PC-9 (cell line): ENCODE measurements at regions of chr12 and their contacts with region 1.

Region 1: DNA sequence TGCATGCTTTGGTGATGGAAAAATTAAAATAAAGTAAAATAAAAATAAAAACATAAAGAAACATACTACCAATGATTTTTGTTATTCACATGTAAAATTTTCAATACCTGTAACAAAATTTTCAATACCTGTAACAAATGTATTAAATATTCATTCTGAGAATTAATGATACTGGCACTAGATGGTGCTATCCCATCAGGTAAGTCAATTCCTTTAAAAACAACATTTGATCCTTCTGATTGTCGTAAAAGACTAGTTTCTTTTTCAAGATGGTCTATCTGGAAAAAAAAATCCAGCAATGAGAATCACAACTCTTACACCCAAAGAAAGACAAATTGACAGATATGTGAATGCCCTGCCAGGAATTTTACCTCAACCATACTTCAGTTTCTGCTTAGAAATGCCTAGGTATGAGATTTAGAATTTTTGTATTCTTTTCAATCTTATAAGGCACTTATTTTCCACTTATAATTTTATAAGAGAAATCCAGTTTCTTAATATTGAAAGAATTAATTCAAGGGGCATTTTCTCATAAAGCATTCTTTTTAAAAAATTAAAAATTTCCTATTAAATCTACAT is 30.7 kb downstream of the CEP290 start:
- DNase-seq: no peak
- H3K4me3 ChIP-seq: no peak overlapping the region
- H3K27ac ChIP-seq: no peak overlapping the region
- H3K4me1 ChIP-seq: no peaks in the 10 kb centered on the region
- H3K27me3 ChIP-seq: no peaks in the 10 kb centered on the region
- CTCF ChIP-seq: peak; percentile 72

Region 2: DNA sequence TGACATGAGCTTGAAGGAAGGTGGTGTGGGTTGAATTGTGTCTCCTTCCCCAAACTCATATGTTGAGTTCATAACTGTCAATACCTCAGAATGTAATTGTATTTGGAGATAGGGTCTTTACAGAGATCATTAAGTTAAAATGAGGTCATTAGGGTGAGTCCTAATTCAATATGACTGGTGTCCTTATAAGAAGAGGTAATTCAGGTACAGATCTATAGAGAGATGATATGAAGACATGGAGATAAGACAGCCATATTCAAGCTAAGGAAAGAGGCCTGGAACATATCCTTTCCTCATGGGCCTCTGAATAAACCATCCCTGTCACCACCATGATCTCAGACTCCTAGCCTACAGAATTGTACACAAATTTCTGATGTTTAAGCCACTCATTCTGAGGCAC is 1340.3 kb before region 1 on chr12:
- CTCF ChIA-PET with region 1: no interaction called
- POLR2A ChIA-PET with region 1: no interaction called
- intact Hi-C with region 1: no loop called
- DNase-seq: no peak
- H3K4me3 ChIP-seq: no peak overlapping the region
- H3K27ac ChIP-seq: no peak overlapping the region
- H3K4me1 ChIP-seq: no peaks in the 10 kb centered on the region
- H3K27me3 ChIP-seq: no peaks in the 10 kb centered on the region
- CTCF ChIP-seq: no peak

Region 3: GRCh38 chr12:88153959-88154358 is 42.8 kb after region 1 on chr12:
- CTCF ChIA-PET with region 1: no interaction called
- POLR2A ChIA-PET with region 1: no interaction called
- intact Hi-C with region 1: no loop called
- DNase-seq: no peak
- H3K4me3 ChIP-seq: no peak overlapping the region
- H3K27ac ChIP-seq: no peak overlapping the region
- H3K4me1 ChIP-seq: no peaks in the 10 kb centered on the region
- H3K27me3 ChIP-seq: no peaks in the 10 kb centered on the region
- CTCF ChIP-seq: peak; percentile 69

Region 4: GRCh38 chr12:88291498-88292131 is 180.5 kb after region 1 on chr12:
- CTCF ChIA-PET with region 1: no interaction called
- POLR2A ChIA-PET with region 1: no interaction called
- intact Hi-C with region 1: no loop called
- DNase-seq: no peak
- H3K4me3 ChIP-seq: no peak overlapping the region
- H3K27ac ChIP-seq: no peak overlapping the region
- H3K4me1 ChIP-seq: no peaks in the 10 kb centered on the region
- H3K27me3 ChIP-seq: no peaks in the 10 kb centered on the region
- CTCF ChIP-seq: no peak

Region 5: GRCh38 chr12:88401155-88401554 is 290.0 kb after region 1 on chr12:
- CTCF ChIA-PET with region 1: no interaction called
- POLR2A ChIA-PET with region 1: no interaction called
- intact Hi-C with region 1: no loop called
- DNase-seq: peak in 1 of 2 experiments; percentile 42
- H3K4me3 ChIP-seq: no peak overlapping the region
- H3K27ac ChIP-seq: no peak overlapping the region
- H3K4me1 ChIP-seq: peaks cover 23% of the 10 kb centered on the region
- H3K27me3 ChIP-seq: no peaks in the 10 kb centered on the region
- CTCF ChIP-seq: no peak

Region 6: DNA sequence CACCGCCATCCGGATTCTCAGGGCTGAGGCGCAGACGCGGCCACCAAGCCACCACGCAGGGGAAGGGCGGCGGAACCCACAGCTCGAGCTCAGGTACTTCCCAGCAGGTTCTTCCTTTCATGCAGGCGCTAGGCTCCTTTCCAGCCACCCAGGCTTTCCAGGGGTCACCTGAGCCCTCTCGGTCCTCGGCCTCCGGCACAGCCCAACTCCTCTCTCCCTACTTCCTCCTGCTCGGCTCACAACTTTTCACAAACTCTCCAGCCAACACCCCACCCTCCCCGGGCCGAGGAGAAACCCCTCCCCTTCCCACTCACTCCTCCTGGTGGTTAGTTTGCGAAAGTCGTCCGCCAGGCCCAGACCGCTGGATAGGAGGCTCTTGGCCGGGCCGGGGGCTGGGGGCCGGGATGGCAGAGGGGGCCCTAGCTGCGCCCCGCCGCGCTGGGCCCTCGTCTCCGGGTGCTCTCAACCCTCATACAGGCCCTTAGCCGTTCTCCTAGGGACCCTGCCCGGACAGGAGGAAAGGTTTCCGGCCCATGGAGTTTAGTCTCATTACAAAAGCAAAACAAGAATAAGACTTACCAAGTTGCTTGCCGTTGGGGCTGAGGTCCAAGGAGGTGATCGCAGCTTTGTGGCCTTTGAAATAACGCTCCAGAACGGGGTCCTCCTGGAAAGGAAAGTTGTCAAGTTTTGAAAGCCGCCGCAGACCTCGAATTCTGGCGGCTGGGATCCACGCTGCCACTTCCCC is 1413.5 kb after region 1 on chr12 and contains the start of gene GALNT4:
- CTCF ChIA-PET with region 1: no interaction called
- POLR2A ChIA-PET with region 1: no interaction called
- intact Hi-C with region 1: loop called (anchors 1 kb)
- DNase-seq: peak; percentile 70 to 82
- H3K4me3 ChIP-seq: peak within 1 kb of the TSS; percentile 98
- H3K27ac ChIP-seq: peak within 1 kb of the TSS; percentile 14; the same call in 1 of the 2 replicates
- H3K4me1 ChIP-seq: peaks cover 22% of the 10 kb centered on the region
- H3K27me3 ChIP-seq: no peaks in the 10 kb centered on the region
- CTCF ChIP-seq: peak; percentile 75
- total RNA-seq, gene GALNT4: 3.2 and 3.7 TPM in 2 replicates